Ascending aorta (tissue), 2 donors: ENCODE measurements at regions of chr11 and their contacts with region 1.

Region 1: DNA sequence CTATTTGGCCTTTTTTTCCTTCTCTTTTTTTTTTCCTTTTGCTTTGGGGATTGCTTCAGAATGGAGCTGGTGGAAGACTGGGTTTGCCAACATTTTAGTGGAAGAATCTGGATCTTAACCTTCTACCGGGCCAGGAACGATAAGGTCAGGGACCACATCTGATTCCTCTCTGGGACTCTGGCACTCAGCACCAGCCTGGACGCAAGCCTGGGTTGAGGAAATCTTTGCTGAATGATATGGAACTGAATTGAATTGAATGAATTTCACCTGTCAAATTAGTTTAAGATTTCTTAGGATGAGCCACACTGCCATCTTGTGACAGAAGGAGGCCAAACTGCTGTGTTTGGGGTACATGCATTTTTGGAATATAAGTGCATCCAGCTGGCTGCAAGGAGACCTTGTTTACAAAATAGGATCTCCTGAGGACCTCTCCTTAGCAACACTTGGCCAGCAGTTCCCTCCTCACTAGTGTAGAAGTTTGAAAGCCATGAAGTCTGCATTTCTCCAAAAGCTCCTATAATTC is 30.4 kb downstream of the TPBGL start:
- DNase-seq: no peak
- H3K4me3 ChIP-seq: no peak overlapping the region
- H3K27ac ChIP-seq: no peak overlapping the region
- H3K4me1 ChIP-seq: no peaks in the 10 kb centered on the region
- H3K27me3 ChIP-seq: no peaks in the 10 kb centered on the region
- CTCF ChIP-seq: no peak

Region 2: GRCh38 chr11:75204685-75205563 is 66.0 kb before region 1 on chr11:
- intact Hi-C with region 1: no loop called
- DNase-seq: peak in 1 of 2 donors; percentile 83
- H3K4me3 ChIP-seq: no peak overlapping the region
- H3K27ac ChIP-seq: no peak overlapping the region
- H3K4me1 ChIP-seq: no peaks in the 10 kb centered on the region
- H3K27me3 ChIP-seq: no peaks in the 10 kb centered on the region
- CTCF ChIP-seq: peak; percentile 26 to 63 (median 55)

Region 3: GRCh38 chr11:75468534-75469340 is 197.8 kb after region 1 on chr11:
- intact Hi-C with region 1: loop called (anchors 10 kb)
- DNase-seq: no peak
- H3K4me3 ChIP-seq: no peak overlapping the region
- H3K27ac ChIP-seq: no peak overlapping the region
- H3K4me1 ChIP-seq: no peaks in the 10 kb centered on the region
- H3K27me3 ChIP-seq: no peaks in the 10 kb centered on the region
- CTCF ChIP-seq: no peak